ENCODE measurements at regions of chr3 and their contacts with region 1.

Region 1: GRCh38 chr3:115092220-115092791 is 54.8 kb downstream of the ZBTB20 start:
- DNase-seq: peak; percentile 69
- ATAC-seq: peak; percentile 100
- H3K4me3 ChIP-seq: no peak overlapping the region
- H3K27ac ChIP-seq: no peak overlapping the region
- H3K4me1 ChIP-seq: no peaks in the 10 kb centered on the region
- H3K27me3 ChIP-seq: no peaks in the 10 kb centered on the region
- CTCF ChIP-seq: peak; percentile 82
- POLR2A ChIP-seq: no peak
- RAD21 ChIP-seq: peak; percentile 81

Region 2: GRCh38 chr3:114827495-114827894 is 264.8 kb before region 1 on chr3:
- CTCF ChIA-PET with region 1: interaction called, 4 read pairs
- POLR2A ChIA-PET with region 1: no interaction called
- dilution Hi-C with region 1: no loop called
- in situ Hi-C with region 1: loop called (anchors 10 kb)
- intact Hi-C with region 1: loop called (anchors 1 kb)
- DNase-seq: peak; percentile 58
- ATAC-seq: peak; percentile 77
- H3K4me3 ChIP-seq: no peak overlapping the region
- H3K27ac ChIP-seq: no peak overlapping the region
- H3K4me1 ChIP-seq: no peaks in the 10 kb centered on the region
- H3K27me3 ChIP-seq: no peaks in the 10 kb centered on the region
- CTCF ChIP-seq: peak; percentile 61
- POLR2A ChIP-seq: no peak
- RAD21 ChIP-seq: peak; percentile 74

Region 3: GRCh38 chr3:114834170-114834940 is 258.0 kb before region 1 on chr3:
- CTCF ChIA-PET with region 1: interaction called, 4 read pairs
- POLR2A ChIA-PET with region 1: no interaction called
- dilution Hi-C with region 1: no loop called
- in situ Hi-C with region 1: loop called (anchors 10 kb)
- intact Hi-C with region 1: loop called (anchors 2 kb)
- DNase-seq: peak; percentile 61
- ATAC-seq: peak; percentile 87
- H3K4me3 ChIP-seq: no peak overlapping the region
- H3K27ac ChIP-seq: peak overlapping the region; percentile 73; the same call in 1 of the 2 replicates
- H3K4me1 ChIP-seq: peaks cover 7% of the 10 kb centered on the region
- H3K27me3 ChIP-seq: no peaks in the 10 kb centered on the region
- CTCF ChIP-seq: no peak
- POLR2A ChIP-seq: no peak
- RAD21 ChIP-seq: no peak

Region 4: DNA sequence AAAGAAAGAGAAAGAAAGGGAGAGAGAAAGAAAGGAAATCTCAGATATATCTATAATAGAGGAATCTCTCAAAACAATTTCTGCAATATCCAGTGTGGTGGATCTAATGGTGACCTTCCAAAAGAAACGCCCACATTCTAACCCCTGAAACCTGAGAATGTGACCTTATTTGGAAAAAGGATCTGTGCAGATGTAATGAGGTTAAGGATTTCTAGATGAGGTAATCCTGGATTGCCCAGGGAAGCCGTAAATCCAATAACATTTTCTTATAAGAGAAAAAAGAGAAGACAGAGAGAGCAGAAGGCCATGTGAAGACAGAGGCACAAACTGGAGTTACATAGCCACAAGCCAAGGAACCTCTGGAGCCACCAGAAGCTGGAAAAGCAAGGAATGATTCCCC is 252.8 kb before region 1 on chr3:
- CTCF ChIA-PET with region 1: interaction called, 4 read pairs
- POLR2A ChIA-PET with region 1: no interaction called
- dilution Hi-C with region 1: no loop called
- in situ Hi-C with region 1: loop called (anchors 10 kb)
- intact Hi-C with region 1: loop called (anchors 2 kb)
- DNase-seq: peak; percentile 27
- ATAC-seq: no peak
- H3K4me3 ChIP-seq: no peak overlapping the region
- H3K27ac ChIP-seq: no peak overlapping the region
- H3K4me1 ChIP-seq: peaks cover 6% of the 10 kb centered on the region
- H3K27me3 ChIP-seq: no peaks in the 10 kb centered on the region
- CTCF ChIP-seq: no peak
- POLR2A ChIP-seq: no peak
- RAD21 ChIP-seq: no peak

Region 5: GRCh38 chr3:115040673-115041286 is 51.5 kb before region 1 on chr3:
- CTCF ChIA-PET with region 1: no interaction called
- POLR2A ChIA-PET with region 1: no interaction called
- dilution Hi-C with region 1: no loop called
- in situ Hi-C with region 1: no loop called
- intact Hi-C with region 1: loop called (anchors 1 kb)
- DNase-seq: peak; percentile 52
- ATAC-seq: peak; percentile 65
- H3K4me3 ChIP-seq: no peak overlapping the region
- H3K27ac ChIP-seq: no peak overlapping the region
- H3K4me1 ChIP-seq: peaks cover 2% of the 10 kb centered on the region; the same call in 1 of the 2 replicates
- H3K27me3 ChIP-seq: no peaks in the 10 kb centered on the region
- CTCF ChIP-seq: peak; percentile 72
- POLR2A ChIP-seq: no peak
- RAD21 ChIP-seq: peak; percentile 62

Region 6: DNA sequence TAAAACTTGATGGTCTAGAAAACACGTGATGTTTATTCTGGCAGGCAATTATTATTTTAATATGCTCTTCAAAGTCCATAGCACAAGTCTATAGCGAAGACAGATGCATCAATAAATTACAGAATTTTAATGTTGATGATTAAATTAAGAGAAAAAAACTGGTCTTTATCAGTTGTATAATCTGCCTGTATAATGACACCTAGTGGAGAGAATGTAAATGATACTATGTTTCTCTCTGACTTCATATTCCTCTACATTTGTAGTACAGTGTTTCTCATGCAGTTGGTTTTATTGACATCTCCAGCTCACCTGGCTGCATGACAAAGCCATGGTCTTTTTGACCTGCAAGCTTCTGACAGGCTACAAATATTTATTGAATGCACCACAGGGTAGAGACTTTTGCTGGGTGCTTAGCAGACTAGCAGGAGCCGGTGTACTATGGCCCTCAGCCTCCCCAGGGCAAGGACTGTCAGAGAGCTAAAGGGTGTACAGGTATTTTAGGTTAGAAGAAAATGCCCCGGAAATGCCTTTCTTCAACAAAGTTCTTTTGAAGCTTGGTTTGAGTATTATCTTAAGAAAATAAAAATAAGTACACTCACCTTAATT is 820.9 kb after region 1 on chr3:
- CTCF ChIA-PET with region 1: no interaction called
- POLR2A ChIA-PET with region 1: no interaction called
- dilution Hi-C with region 1: no loop called
- in situ Hi-C with region 1: no loop called
- intact Hi-C with region 1: no loop called
- DNase-seq: peak; percentile 28
- ATAC-seq: peak; percentile 64
- H3K4me3 ChIP-seq: no peak overlapping the region
- H3K27ac ChIP-seq: no peak overlapping the region
- H3K4me1 ChIP-seq: no peaks in the 10 kb centered on the region; the same call in 1 of the 2 replicates
- H3K27me3 ChIP-seq: no peaks in the 10 kb centered on the region
- CTCF ChIP-seq: peak; percentile 54
- POLR2A ChIP-seq: no peak
- RAD21 ChIP-seq: no peak